ENCODE measurements at regions of chr14 and their contacts with region 1.

Region 1: DNA sequence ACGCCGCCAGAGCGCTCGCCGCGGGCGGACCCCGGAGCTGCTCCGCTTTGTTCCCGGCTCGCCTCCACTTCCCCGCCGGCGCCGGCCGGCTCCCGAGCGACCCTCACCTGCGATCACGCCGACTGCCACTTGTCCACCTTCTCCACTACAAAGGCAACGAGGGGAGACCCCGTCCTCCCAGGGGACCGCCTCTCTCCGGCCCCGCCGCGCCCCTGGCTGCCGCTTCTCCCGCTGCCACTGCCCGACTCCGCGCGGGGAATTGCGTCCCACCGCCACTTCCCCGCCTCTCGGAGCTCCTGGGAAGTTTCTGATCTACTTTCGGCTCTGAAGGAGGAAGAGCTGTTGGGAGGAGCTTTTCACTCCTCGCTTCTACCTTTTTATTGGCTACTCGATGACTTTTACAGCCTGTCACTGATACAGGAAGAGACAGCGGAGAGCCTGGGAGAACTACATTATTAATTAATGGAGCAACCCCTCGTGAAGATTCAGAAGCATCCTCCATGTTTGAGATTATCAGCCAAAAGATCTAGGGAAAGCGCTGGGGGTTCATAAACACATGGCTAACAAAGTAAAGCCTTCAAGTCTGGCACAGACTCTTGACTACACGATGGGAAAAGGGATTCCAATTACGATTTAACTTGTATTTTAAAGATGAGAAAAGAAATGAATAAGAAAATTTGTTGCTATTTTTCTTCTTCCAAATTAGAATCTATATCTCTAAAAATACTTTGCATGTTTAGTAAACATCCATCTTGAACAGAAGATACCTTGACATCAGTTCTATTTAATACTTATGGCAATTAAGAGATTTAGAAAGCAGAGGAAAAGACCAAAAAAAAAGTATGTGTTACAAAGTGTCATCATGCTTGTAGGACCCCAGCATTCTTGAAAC is at the start of gene BAZ1A:
- DNase-seq: peak; percentile 76
- ATAC-seq: peak; percentile 59 to 75
- total RNA-seq, gene BAZ1A: 8.2 to 13.8 TPM

Region 2: GRCh38 chr14:34237081-34237480 is 638.2 kb before region 1 on chr14:
- intact Hi-C with region 1: no loop called
- DNase-seq: no peak
- ATAC-seq: no peak

Region 3: GRCh38 chr14:34982417-34983147 is 107.3 kb after region 1 on chr14 and contains the start of gene SRP54:
- intact Hi-C with region 1: loop called (anchors 2 to 10 kb)
- DNase-seq: peak; percentile 98
- ATAC-seq: peak; percentile 97
- total RNA-seq, gene SRP54: 28.6 to 38.2 TPM

Region 4: GRCh38 chr14:35046048-35046741 is 170.9 kb after region 1 on chr14 and contains the start of gene FAM177A1:
- intact Hi-C with region 1: loop called in 1 of 2 experiments (anchors 5 kb)
- DNase-seq: peak; percentile 99
- ATAC-seq: peak; percentile 98 to 99
- total RNA-seq, gene FAM177A1: 40.4 to 88.2 TPM